Spleen (tissue), 13 donors: ENCODE measurements at regions of chr6 and their contacts with region 1.

Region 1: DNA sequence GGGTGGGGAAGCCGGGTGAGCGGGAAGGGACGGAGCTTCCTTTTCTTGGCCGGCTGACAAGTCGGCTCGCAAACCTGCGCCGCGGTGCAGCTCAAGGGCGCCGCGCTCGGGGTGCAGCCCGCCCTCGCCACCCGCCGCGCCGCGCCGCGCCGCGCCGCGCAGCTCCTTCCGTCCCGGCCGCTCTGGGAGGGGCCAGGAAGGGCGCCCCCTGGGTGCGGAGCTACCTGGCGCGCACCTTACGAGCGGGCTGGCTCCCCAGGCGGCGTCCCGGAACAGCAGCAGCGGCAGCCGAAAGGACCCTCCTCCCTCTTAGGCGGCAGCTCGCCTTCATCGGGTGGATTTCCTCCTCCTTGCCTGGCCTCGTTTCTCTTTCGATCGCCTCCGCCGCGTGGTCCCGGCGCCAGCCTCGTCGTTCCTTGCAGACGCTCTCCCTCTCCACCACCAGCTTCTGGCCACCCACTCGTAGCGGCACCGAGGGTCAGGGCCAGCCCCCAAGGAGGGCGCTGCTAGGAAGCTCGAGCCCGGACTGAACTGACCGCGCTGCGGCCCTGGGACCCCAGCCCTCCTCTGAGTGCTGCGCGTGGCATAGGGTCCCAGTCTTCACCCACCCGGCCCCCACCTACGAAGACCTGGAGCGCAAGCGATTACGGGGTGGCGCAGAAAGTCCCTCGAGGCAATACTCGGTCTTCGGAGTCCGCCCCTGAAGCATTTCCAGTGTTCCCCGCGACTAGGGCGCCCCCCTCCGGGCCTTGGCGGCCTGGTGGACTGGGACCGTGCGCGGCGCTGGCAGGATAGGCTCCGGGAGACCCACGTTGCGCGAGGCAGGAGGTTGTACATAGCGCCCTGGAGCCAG is at the start of gene MAP3K5:
- DNase-seq: peak; percentile 99
- H3K4me3 ChIP-seq: peak within 1 kb of the TSS; percentile 83 to 93 (median 90)
- H3K27ac ChIP-seq: peak within 1 kb of the TSS; percentile 95 to 99 (median 96)
- H3K4me1 ChIP-seq: peaks cover 36 to 51% (median 41%) of the 10 kb centered on the region in 6 donors
- H3K27me3 ChIP-seq: no peaks in the 10 kb centered on the region
- CTCF ChIP-seq: peak; percentile 74 to 95 (median 90)
- POLR2A ChIP-seq: peak in 1 of 3 donors; percentile 40
- total RNA-seq, gene MAP3K5: 28.8 to 55.0 (median 39.3) TPM

Region 2: GRCh38 chr6:136643850-136644596 is 148.6 kb before region 1 on chr6:
- intact Hi-C with region 1: loop called (anchors 2 kb)
- DNase-seq: peak; percentile 90
- H3K4me3 ChIP-seq: no peak overlapping the region
- H3K27ac ChIP-seq: peak overlapping the region in 4 of 8 donors; percentile 19 to 57 (median 40)
- H3K4me1 ChIP-seq: peaks cover 8 to 49% (median 19%) of the 10 kb centered on the region in 6 donors
- H3K27me3 ChIP-seq: no peaks in the 10 kb centered on the region
- CTCF ChIP-seq: peak; percentile 70 to 95 (median 89)
- POLR2A ChIP-seq: no peak

Region 3: GRCh38 chr6:136932599-136932998 is 140.0 kb after region 1 on chr6:
- intact Hi-C with region 1: no loop called
- DNase-seq: no peak
- H3K4me3 ChIP-seq: no peak overlapping the region
- H3K27ac ChIP-seq: no peak overlapping the region
- H3K4me1 ChIP-seq: no peaks in the 10 kb centered on the region
- H3K27me3 ChIP-seq: peaks cover 0 to 36% (median 0%) of the 10 kb centered on the region in 7 donors
- CTCF ChIP-seq: no peak
- POLR2A ChIP-seq: no peak